AG04450 (cell line): ENCODE measurements at regions of chr22 and their contacts with region 1.

Region 1: GRCh38 chr22:37862570-37863325 is 13.5 kb downstream of the EIF3L start:
- DNase-seq: no peak
- H3K4me3 ChIP-seq: no peak overlapping the region
- H3K27ac ChIP-seq: no peak overlapping the region
- H3K27me3 ChIP-seq: no peaks in the 10 kb centered on the region
- CTCF ChIP-seq: no peak

Region 2: DNA sequence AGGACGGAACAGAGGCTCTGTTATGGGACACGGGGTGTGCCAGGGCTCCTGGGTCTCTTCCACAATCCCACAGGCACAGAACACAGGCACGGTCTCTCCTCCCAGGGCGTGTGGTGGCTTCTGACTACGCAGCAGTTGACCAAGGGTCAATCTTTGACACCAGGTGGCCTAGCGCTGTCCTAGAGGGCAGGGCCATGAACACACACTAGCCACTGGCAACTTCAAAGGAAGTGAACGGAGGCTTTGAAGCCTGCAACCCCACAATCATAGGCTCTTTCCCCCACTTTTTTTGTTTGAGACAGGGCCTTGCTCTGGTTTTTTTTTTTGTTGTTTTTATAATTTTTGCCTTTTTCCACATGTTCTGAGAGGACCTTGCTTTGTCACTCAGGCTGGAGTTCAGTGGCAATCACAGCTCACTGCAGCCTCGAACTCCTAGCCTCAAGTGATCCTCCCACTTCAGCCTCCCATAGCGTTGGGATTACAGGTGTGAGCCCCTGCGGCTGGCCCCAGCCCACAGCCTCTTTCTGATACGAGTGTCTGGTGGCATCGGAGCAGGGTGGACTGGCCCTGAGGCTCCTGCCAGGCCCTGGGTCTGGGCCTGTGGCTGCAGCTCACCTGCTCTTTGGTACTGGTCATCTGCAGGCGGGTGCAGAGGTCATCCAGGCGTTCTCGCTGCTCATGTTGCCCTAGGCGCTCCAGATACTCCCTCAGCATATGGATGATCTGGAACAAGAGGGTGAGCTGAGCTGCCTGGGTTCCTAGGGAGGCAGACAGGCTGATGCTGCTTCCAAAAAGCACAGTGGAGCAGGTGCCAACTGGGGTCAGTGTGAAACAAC is 30.5 kb before region 1 on chr22:
- CTCF ChIA-PET with region 1: interaction called, 16 read pairs
- POLR2A ChIA-PET with region 1: no interaction called
- DNase-seq: no peak
- H3K4me3 ChIP-seq: no peak overlapping the region
- H3K27ac ChIP-seq: no peak overlapping the region
- H3K27me3 ChIP-seq: no peaks in the 10 kb centered on the region
- CTCF ChIP-seq: no peak

Region 3: DNA sequence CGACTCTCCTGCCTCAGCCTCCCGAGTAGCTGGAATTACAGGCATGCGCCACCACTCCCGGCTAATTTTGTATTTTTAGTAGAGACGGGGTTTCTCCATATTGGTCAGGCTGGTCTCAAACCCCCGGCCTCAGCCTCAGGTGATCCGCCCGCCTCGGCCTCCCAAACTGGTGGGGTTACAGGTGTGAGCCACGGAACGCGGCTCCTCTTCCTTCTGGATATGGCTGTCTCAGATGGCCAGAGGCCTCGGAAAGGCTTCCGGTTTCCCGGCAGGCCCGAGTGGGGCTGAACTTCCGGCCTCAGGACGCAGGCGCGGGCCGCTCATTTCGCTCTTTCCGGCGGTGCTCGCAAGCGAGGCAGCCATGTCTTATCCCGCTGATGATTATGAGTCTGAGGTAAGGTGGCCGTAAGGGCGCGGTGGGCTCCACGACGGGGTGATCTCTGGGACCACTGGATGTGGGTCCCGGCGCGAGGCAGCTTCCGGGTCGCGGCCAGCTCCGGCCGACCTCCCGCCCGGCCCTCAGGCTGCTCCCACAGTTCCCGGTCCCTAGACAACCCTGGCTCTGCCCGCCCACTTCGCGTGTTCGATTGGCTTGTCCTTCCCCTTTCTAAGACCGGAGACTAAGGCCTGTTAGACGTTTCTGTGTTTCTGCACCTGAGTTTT is 13.5 kb before region 1 on chr22 and contains the start of gene EIF3L:
- CTCF ChIA-PET with region 1: interaction called, 57 read pairs
- POLR2A ChIA-PET with region 1: interaction called, 5 read pairs
- DNase-seq: peak; percentile 48
- H3K4me3 ChIP-seq: peak within 1 kb of the TSS; percentile 99
- H3K27ac ChIP-seq: peak within 1 kb of the TSS; percentile 87
- H3K27me3 ChIP-seq: no peaks in the 10 kb centered on the region
- CTCF ChIP-seq: no peak
- polyA plus RNA-seq, gene EIF3L: 833 and 867 TPM in 2 replicates

Region 4: GRCh38 chr22:37887610-37888378 is 25.0 kb after region 1 on chr22:
- CTCF ChIA-PET with region 1: interaction called, 45 read pairs
- POLR2A ChIA-PET with region 1: no interaction called
- DNase-seq: peak; percentile 47
- H3K4me3 ChIP-seq: no peak overlapping the region
- H3K27ac ChIP-seq: peak overlapping the region; percentile 69
- H3K27me3 ChIP-seq: no peaks in the 10 kb centered on the region
- CTCF ChIP-seq: peak; percentile 79

Region 5: DNA sequence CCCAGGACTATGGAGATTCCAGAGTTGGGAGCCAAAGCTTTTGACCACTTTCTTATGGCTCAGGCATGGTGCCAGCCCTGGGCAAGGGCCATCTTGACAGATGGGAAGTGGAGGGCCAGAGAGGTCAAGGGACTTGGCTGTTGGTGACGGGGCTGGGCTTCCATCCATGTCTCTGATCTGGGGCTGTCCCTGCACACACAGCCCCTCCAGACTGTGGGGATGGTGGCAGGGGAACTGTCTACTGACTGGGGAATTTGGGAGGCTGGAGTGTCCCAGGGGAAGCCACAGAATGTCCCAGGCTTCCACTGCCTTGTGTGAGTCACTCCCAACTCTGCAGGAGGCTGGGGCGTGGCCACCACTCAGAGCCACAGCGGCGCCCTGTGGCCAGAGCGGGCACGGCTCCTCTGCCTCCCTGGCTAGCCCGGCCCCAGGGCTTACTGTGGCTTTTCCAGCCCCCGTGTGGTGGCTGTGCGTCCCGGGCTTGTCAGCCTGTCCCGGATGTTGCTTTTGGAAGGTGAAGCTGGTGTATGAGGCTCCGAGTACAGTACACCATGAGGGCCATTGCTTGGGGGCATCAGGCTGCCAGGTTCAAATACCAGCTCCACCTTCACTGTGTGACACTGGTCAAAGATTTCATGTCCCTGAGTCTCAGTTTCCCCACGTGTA is 71.1 kb after region 1 on chr22:
- CTCF ChIA-PET with region 1: interaction called, 12 read pairs
- POLR2A ChIA-PET with region 1: no interaction called
- DNase-seq: peak; percentile 55
- H3K4me3 ChIP-seq: no peak overlapping the region
- H3K27ac ChIP-seq: peak overlapping the region; percentile 57
- H3K27me3 ChIP-seq: no peaks in the 10 kb centered on the region
- CTCF ChIP-seq: peak; percentile 98